ENCODE measurements at regions of chr18 and their contacts with region 1.

Region 1: GRCh38 chr18:66603941-66604627 is at the start of gene CDH19:
- DNase-seq: no peak
- total RNA-seq, gene CDH19: 14.8 TPM

Region 2: GRCh38 chr18:66235206-66235605 is 368.9 kb before region 1 on chr18:
- intact Hi-C with region 1: no loop called
- DNase-seq: no peak

Region 3: GRCh38 chr18:66724664-66725356 is 120.7 kb after region 1 on chr18:
- intact Hi-C with region 1: loop called (anchors 10 kb)
- DNase-seq: no peak

Region 4: DNA sequence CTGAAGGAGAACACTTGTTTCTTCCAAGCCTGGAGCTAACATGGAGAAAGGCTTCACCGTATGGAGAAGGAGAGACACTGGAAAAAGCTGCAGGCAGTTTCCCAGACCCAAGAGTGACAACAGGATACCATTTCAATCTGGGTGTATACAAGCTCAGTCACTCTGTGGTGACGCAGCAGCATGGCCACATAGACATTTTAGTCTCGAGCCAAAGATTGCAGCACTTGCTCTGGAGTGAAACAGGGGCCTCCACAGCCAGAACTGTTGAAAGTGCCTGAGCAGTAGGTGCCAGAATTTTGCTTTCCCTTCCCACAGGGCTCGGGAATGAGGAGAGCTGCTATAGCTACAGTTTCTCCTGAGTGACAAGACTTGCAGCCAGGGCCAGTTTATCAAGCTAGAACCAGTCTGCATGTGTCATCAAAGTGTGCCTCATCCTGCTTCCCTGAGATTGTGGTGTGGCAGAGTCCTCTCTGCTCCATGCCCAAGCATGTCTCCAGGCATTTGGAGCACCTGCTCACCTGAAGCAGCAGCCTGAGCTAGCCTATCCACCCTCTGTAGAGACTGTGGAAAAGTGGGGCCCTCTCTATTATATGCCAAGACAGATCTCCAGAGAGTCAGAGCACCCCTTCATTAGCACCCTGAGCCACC is 234.4 kb after region 1 on chr18:
- intact Hi-C with region 1: no loop called
- DNase-seq: no peak